Endothelial cell of umbilical vein (primary cell): ENCODE measurements at regions of chr1 and their contacts with region 1.

Region 1: GRCh38 chr1:226634166-226634588 is 85.6 kb downstream of the STUM start:
- DNase-seq: peak; percentile 60
- H3K4me3 ChIP-seq: no peak overlapping the region
- H3K27ac ChIP-seq: no peak overlapping the region
- H3K4me1 ChIP-seq: no peaks in the 10 kb centered on the region
- H3K27me3 ChIP-seq: no peaks in the 10 kb centered on the region
- CTCF ChIP-seq: peak; percentile 83 to 95
- POLR2A ChIP-seq: no peak

Region 2: DNA sequence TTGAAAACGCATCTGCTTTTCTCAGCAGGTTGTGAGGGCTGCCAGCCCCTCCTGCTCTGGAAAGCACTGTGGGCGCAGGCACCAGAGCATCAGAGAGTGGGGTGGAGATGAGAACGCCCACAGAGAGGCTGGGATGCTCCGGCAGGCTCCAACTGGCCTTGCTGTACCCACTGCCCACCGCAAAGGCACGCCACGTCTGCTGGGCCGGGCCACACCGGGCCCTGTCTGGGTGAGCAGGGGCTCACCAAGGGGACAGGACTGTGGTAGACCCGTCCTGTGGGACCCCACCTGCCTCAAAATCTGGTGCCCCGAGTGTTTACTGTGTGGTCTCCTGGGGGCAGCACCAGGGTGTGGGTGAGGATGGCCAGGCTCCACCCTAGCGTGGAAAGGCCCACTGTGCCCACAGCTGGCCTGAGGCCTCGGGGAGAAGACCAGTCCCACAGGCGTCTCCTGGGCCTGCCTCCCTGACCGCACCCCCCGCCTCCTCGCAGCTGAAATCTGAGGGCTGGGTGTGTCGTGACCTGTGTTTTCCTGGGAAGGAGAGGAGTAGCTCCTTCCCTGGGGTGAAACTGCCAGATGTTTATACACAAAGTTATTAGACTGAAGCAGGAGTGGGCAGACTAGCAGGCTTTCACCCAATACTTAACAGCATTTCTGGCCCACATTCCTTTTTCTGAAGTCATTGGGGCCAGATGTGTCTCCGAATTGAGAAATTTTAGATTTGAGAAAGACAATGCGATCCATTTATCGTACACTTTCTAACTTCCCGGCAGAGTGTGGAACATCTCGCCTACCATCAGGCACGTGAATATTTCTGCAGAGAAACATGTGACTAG is 31.8 kb before region 1 on chr1:
- CTCF ChIA-PET with region 1: no interaction called
- POLR2A ChIA-PET with region 1: no interaction called
- dilution Hi-C with region 1: no loop called
- intact Hi-C with region 1: no loop called
- DNase-seq: no peak
- H3K4me3 ChIP-seq: no peak overlapping the region
- H3K27ac ChIP-seq: no peak overlapping the region
- H3K4me1 ChIP-seq: no peaks in the 10 kb centered on the region
- H3K27me3 ChIP-seq: peaks cover 0 to 9% of the 10 kb centered on the region in 2 experiments
- CTCF ChIP-seq: no peak
- POLR2A ChIP-seq: no peak

Region 3: DNA sequence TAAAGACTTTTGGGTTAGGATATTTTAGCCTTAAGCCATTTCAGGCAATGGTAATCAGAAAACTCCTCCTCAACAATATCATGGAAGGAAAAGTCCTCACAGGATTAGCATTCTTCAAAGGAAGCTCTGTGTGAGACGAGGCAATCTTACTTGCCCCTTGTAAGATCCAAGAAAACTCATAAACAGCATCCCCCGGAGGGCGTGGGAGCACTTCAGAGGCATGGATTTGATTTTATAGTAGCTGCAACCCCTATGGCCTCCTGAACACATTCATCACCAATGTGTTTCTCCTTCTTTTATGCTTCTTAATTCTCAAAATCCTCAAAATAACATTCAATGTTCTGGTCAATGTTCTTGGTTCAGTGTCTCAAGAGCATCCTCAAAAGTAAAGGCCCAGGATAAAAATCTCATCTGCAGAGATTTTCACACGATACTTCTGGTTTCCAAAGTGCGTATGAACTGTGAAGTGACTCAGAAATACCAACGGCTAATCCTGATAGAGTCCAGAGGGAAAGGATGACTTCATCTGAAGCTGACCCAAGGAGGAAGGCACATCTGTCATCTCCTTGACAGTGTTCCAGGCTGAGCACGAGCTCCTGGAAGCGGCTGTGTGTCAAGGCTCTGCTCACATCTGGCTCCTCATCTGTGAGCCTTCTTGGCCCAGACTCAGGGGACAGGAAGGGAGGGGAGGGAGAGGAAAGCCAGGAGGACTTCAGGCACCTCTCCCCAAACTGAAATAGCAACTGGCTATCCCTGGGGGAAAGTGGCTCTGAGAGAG is 187.0 kb after region 1 on chr1:
- CTCF ChIA-PET with region 1: interaction called, 85 read pairs
- POLR2A ChIA-PET with region 1: no interaction called
- dilution Hi-C with region 1: no loop called
- intact Hi-C with region 1: loop called (anchors 2 kb)
- DNase-seq: peak; percentile 96
- H3K4me3 ChIP-seq: no peak overlapping the region
- H3K27ac ChIP-seq: peak overlapping the region; percentile 83
- H3K4me1 ChIP-seq: peaks cover 46% of the 10 kb centered on the region
- H3K27me3 ChIP-seq: no peaks in the 10 kb centered on the region
- CTCF ChIP-seq: no peak
- POLR2A ChIP-seq: no peak

Region 4: DNA sequence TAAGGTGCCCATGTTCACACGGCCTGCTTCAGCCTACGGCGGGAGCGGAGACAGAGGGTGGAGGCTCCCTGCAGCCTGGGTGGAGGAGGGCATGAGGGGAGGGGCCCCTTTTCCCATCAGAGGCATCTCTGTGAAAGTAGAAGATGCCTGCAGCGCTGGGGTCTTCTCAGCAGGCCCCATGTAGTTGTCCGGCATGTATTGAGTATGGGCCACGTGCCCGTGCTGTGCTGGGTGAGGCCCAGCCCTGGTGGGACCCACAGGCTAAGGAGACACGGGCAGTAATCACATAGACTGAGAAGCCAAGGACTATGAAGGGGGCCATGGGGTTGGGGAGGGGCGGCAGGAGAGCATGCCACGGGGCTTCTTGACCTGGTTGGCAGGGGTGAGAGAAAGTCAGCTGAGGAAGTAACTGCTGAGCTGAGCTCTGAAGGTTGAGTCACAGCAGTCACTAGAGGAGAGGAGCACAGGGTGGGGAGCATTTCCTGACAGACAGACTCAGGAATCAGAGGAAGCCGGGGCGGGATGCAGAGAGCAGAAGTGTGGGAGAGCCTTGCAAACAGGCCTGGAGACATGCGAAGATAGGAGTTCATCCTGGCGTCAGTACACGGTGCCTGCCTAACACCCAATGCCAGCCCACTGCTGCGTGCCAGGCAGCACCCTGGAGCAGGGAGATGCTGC is 257.8 kb after region 1 on chr1:
- CTCF ChIA-PET with region 1: no interaction called
- POLR2A ChIA-PET with region 1: no interaction called
- dilution Hi-C with region 1: no loop called
- intact Hi-C with region 1: loop called (anchors 5 kb)
- DNase-seq: peak; percentile 65
- H3K4me3 ChIP-seq: no peak overlapping the region
- H3K27ac ChIP-seq: no peak overlapping the region
- H3K4me1 ChIP-seq: peaks cover 8% of the 10 kb centered on the region
- H3K27me3 ChIP-seq: no peaks in the 10 kb centered on the region
- CTCF ChIP-seq: no peak
- POLR2A ChIP-seq: no peak

Region 5: DNA sequence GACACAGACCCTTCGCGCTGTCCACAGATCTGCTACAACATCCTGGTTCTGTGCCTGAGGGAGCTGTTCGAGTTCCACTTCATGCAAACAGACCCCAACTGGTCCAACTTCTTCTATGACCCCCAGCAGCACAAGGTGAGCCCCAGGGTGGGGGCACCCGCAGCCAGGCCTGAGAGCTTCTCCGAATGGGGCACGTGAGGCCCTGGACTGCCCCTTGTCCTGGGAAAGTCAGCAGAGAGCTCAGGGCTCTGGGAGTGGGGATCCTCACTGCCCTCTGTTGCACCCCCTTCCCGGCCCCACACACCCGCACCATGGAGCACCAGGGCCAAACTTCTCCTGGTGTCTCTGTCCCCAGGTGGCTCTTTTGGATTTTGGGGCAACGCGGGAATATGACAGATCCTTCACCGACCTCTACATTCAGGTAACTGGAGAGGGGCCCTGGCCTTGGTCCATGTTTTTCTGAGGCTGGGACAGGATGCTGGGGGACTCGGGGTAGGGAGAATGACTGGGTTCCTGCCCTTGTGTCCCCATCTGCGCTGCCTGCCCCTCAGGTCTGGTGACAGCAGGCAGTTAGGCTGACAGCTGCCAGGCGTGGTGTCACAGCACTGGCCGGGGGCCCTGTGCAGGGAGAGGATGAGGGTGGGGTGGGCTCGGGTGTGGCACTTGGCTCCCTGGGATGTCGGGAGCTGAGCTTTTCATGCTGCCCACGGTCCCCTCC is 350.5 kb after region 1 on chr1:
- CTCF ChIA-PET with region 1: no interaction called
- POLR2A ChIA-PET with region 1: no interaction called
- dilution Hi-C with region 1: no loop called
- intact Hi-C with region 1: loop called (anchors 5 kb)
- DNase-seq: no peak
- H3K4me3 ChIP-seq: no peak overlapping the region
- H3K27ac ChIP-seq: no peak overlapping the region
- H3K4me1 ChIP-seq: peaks cover 6% of the 10 kb centered on the region
- H3K27me3 ChIP-seq: no peaks in the 10 kb centered on the region
- CTCF ChIP-seq: no peak
- POLR2A ChIP-seq: no peak